CD8-positive, alpha-beta T cell (primary cell): ENCODE measurements at regions of chr1 and their contacts with region 1.

Region 1: DNA sequence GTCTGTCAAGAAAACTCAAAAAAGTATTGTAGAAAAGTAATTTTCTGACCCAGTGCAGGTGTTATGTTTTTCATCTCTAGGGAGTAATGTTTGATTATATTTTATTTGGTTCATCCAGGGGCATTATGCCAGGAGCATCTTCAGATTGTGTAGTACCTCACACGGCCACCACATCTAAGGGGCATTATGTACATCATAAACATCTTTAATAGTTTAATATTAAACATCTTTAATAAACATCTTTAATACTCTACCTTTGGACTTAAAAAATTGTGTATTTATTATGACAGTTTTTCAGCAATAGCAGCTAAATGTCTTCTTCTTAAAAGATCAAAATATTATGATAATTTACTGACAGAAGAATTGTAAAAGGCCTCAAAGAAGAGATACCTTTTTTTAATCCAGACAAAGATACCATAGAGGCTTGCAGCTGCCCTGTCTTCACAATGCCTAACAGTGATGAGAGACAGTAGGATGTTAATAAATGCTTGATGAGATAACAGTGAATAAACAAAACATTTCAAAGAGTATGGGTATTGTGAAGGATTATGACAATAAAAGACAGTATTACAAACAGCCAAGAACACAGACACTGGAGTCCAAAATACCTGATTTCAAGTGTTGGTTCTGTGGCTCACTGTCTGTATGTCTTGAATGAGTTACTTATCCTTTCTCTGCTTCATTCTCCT is 240.9 kb upstream of the ADGRL2 start:
- DNase-seq: no peak
- ATAC-seq: no peak
- H3K4me3 ChIP-seq: no peak overlapping the region
- H3K4me3 Mint-ChIP-seq: no peak overlapping the region
- H3K27ac ChIP-seq: no peak overlapping the region
- H3K27ac Mint-ChIP-seq: no peak overlapping the region
- H3K4me1 ChIP-seq: no peaks in the 10 kb centered on the region
- H3K4me1 Mint-ChIP-seq: no peaks in the 10 kb centered on the region
- H3K27me3 ChIP-seq: no peaks in the 10 kb centered on the region
- H3K27me3 Mint-ChIP-seq: no peaks in the 10 kb centered on the region
- CTCF ChIP-seq: no peak

Region 2: DNA sequence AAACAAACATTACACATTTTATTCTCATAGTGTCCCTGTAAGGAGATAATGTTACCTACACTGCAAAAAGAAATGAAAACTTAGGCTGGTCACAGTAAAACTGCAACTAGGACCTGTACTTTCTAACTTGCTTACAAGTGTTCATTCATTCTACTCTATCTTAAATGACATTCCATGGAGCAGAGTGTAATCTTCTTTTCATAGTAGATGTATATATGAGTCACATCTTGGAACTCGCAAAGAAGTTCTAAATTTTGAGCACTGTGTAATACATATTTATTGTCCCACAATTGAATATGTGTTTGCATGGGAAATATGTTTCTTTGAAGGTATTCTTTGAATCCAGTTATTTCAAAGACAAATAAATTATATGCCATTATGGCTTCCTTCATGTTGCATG is 1017.6 kb before region 1 on chr1:
- CTCF ChIA-PET with region 1: no interaction called
- POLR2A ChIA-PET with region 1: no interaction called
- intact Hi-C with region 1: no loop called
- DNase-seq: no peak
- ATAC-seq: no peak
- H3K4me3 ChIP-seq: no peak overlapping the region
- H3K4me3 Mint-ChIP-seq: no peak overlapping the region
- H3K27ac ChIP-seq: no peak overlapping the region
- H3K27ac Mint-ChIP-seq: no peak overlapping the region
- H3K4me1 ChIP-seq: no peaks in the 10 kb centered on the region
- H3K4me1 Mint-ChIP-seq: no peaks in the 10 kb centered on the region
- H3K27me3 ChIP-seq: no peaks in the 10 kb centered on the region
- H3K27me3 Mint-ChIP-seq: no peaks in the 10 kb centered on the region
- CTCF ChIP-seq: no peak

Region 3: GRCh38 chr1:81587426-81587825 is 27.6 kb after region 1 on chr1:
- CTCF ChIA-PET with region 1: no interaction called
- POLR2A ChIA-PET with region 1: no interaction called
- intact Hi-C with region 1: loop called in 1 of 2 experiments (anchors 1 kb)
- DNase-seq: no peak
- ATAC-seq: no peak
- H3K4me3 ChIP-seq: no peak overlapping the region
- H3K4me3 Mint-ChIP-seq: no peak overlapping the region
- H3K27ac ChIP-seq: no peak overlapping the region
- H3K27ac Mint-ChIP-seq: no peak overlapping the region
- H3K4me1 ChIP-seq: no peaks in the 10 kb centered on the region
- H3K4me1 Mint-ChIP-seq: no peaks in the 10 kb centered on the region
- H3K27me3 ChIP-seq: no peaks in the 10 kb centered on the region
- H3K27me3 Mint-ChIP-seq: no peaks in the 10 kb centered on the region
- CTCF ChIP-seq: no peak

Region 4: DNA sequence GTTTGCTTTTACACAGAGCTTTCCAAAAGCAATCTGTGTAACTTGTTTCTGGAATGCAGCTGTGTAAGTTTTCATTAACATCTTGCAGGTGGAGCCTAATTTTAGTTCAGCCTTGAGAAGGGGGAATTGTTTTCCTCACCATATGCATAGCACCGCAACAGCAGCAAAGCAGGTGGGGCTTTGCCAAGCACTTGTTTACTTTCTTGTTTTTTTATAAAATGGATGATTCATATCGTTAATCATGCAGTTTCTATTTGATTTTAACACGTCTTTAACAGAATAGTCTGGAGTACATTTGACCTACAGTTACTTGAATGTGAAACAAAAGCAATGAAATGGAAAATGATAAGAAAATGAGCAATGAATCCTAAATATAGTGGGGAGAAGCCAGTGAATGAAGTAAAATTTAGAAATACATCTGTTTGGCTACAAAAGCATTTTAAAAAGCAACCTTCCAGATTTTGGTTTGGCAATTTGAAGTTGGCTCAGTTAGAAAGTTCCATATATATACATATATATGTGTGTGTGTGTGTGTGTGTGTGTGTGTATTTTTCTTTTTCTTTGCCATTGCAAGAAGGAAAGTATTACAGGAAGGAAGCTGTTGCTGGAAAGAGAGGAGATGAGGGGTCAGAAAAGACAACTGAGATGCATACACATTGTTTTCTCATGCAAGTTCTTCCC is 121.9 kb after region 1 on chr1:
- CTCF ChIA-PET with region 1: no interaction called
- POLR2A ChIA-PET with region 1: no interaction called
- intact Hi-C with region 1: no loop called
- DNase-seq: no peak
- ATAC-seq: no peak
- H3K4me3 ChIP-seq: no peak overlapping the region
- H3K4me3 Mint-ChIP-seq: no peak overlapping the region
- H3K27ac ChIP-seq: no peak overlapping the region
- H3K27ac Mint-ChIP-seq: no peak overlapping the region
- H3K4me1 ChIP-seq: no peaks in the 10 kb centered on the region
- H3K4me1 Mint-ChIP-seq: no peaks in the 10 kb centered on the region
- H3K27me3 ChIP-seq: no peaks in the 10 kb centered on the region
- H3K27me3 Mint-ChIP-seq: no peaks in the 10 kb centered on the region
- CTCF ChIP-seq: no peak